MCF 10A (cell line): ENCODE measurements at regions of chr21 and their contacts with region 1.

Region 1: DNA sequence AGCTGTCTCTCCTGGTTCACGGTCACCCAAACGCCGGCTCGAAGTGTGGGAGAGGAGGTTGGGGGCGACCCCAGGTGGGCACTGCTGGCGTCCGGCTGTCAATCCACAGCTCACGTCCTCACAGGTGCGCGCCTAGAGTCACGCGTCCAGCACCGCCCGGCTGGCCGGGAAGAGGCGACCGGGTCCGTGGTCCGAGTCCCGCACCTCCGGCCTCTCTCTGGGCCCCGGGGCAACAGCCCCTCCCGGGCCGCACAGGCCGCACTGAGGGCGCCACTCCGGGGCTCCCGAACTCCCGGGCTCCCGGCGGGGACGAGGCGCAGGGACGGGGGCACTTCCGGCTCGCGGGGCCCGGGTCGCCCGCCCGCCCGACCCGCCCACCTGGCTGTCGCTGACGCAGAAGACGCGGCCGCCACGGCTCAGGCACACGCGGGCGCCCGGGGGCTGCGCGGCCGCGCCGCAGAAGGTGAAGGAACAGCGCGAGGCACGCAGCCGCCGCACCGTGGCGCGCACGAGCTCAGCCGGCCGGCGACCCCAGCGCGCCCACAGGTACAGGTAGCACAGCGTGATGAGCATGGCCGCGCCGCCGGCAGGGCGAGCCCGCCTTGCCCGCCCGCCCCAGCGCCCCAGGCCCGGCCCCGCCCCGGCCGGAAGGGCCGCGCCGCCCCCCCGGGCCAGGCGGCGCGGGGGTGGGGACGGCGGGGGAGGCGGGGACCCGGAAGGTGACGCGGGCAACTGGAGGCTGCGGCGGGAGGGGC is at the start of gene HLCS:
- DNase-seq: peak; percentile 66
- H3K4me3 Mint-ChIP-seq: peak within 1 kb of the TSS; percentile 78
- H3K27ac Mint-ChIP-seq: peak within 1 kb of the TSS; percentile 73
- H3K4me1 Mint-ChIP-seq: peaks cover 12% of the 10 kb centered on the region
- H3K27me3 Mint-ChIP-seq: no peaks in the 10 kb centered on the region
- CTCF ChIP-seq: no peak
- total RNA-seq, gene HLCS: 45.1 and 46.1 TPM in 2 replicates

Region 2: DNA sequence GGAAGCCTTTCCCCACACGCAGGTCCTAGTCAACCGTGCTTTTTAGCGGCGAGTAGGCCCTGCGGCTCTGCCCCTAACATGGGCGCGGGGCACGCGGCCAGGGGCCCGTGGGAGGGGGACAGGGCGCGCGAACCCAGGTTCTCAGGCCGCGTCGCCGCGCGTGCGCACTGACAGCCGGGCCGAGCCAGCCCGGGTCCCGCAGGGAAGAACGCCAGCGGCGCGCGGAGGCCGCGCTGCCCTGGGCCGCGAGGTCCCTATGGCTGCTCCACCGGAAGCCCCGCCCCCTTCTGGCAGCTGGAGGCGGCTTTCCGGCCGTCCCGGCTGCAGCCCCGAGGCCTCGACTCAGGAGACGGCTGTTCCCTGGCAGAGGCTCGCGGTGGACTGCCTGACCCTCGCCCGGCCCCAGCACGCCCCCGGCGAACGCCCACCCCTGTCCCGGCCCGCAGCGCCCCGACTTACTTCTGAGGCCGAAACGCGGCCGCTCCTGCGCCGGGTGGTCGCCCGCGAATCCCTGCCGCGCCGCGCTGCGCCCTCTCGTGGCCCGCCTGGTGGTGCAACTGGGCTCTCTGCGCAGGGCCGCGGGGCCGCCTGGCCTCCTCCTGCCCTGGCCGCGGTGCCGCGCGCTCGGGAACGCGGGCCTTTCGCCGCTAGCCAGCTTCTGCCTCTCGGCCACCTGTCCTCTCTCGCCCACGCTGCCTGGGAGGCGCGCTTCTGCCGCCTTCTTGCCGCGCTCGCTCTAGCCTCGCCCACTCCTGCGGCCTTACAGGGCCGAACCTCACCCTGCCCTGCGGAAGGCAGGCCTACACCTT is 23.7 kb after region 1 on chr21:
- CTCF ChIA-PET with region 1: interaction called, 10 read pairs
- POLR2A ChIA-PET with region 1: interaction called, 6 read pairs
- intact Hi-C with region 1: no loop called
- DNase-seq: peak; percentile 88
- H3K4me3 Mint-ChIP-seq: peak overlapping the region; percentile 81
- H3K27ac Mint-ChIP-seq: peak overlapping the region; percentile 90
- H3K4me1 Mint-ChIP-seq: no peaks in the 10 kb centered on the region
- H3K27me3 Mint-ChIP-seq: no peaks in the 10 kb centered on the region
- CTCF ChIP-seq: peak; percentile 81

Region 3: DNA sequence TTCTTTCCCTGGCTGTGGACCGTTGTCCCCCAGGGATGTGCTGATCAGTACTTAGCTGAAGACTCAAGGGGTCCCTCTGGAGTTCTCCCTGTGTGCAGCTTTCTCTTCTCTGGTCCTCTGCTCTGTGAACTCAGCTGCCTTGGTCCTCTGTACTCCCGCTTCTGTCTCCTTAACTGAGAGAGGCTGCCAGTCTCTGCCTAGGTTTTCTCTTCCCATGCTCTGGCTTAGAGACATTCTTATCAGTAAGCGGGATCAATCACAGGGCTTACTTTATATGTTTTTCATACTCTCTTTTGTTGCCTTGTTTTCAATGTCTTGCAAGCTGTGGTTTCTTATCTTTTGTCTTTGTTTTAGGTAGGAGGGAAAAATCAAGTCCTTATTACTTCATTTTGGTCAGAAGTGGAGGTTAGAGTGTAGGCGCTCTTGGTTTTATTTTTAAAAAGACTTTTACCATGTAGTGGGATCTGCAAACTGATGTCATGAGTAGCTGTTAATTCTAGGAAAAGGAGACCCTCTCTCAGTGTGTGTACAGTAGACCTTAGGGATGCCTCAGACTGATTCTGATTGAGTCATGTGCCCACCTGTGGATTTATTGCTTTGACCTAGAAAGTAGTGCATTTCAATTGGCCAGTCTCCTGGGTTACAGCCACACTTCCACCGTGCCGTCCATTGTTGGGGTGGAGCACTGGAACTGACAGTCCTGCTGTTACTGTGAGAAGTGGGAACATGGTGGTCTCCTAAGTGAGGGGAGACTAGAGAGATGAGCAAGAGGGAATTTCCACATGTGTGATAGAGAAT is 153.4 kb after region 1 on chr21:
- CTCF ChIA-PET with region 1: no interaction called
- POLR2A ChIA-PET with region 1: no interaction called
- intact Hi-C with region 1: no loop called
- DNase-seq: no peak
- H3K4me3 Mint-ChIP-seq: no peak overlapping the region
- H3K27ac Mint-ChIP-seq: no peak overlapping the region
- H3K4me1 Mint-ChIP-seq: peaks cover 22% of the 10 kb centered on the region
- H3K27me3 Mint-ChIP-seq: no peaks in the 10 kb centered on the region
- CTCF ChIP-seq: no peak